ENCODE measurements at regions of chr9 and their contacts with region 1.

Region 1: DNA sequence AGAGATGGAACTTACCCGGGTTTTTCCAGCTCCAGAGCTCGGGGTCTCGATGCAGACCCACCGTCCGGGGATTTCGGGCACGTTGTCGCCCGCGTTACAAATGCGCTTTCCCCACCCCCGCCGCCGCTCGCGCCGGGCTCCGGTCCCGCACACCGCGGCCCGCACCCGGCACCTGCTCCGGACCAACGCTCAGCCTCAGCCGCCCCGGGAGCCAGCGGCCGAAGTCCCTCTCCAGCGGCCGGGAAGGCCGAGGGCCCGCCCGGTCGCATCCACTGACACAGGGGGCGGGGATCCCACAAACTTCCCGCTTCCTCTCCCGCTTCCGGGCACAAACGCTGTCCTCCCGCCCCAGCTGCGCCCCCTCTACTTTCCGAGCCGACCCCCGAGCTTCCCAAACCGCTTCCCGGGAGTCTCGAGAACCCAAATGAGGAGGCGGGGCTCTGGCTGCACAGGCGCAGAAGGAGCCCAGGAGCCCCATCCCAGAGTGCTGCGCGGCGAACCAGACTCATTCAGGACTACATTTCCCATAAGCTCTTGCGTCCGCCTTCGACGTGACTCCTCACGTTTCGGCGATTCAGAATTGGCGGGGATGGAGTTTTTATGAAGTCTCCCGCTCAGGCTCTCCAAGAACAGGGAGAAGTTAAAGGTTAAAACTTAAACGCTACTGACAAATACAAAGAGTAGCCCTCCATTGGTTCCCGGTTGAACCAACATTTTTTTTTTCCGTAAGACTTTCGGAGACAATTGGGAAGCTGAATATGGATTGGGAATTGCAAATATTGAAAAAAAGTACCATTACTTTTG is at the start of gene ZNF782:
- DNase-seq: peak; percentile 94
- H3K4me3 ChIP-seq: peak within 1 kb of the TSS; percentile 65 to 85
- H3K27ac ChIP-seq: peak within 1 kb of the TSS in 1 of 2 experiments; percentile 36; a peak in 3 of 4 replicates
- H3K4me1 ChIP-seq: peaks cover 14 to 15% of the 10 kb centered on the region in 2 experiments
- H3K27me3 ChIP-seq: no peaks in the 10 kb centered on the region
- CTCF ChIP-seq: no peak
- EP300 ChIP-seq: no peak
- RAD21 ChIP-seq: no peak
- polyA plus RNA-seq, gene ZNF782: 1.3 TPM in 2 replicates

Region 2: DNA sequence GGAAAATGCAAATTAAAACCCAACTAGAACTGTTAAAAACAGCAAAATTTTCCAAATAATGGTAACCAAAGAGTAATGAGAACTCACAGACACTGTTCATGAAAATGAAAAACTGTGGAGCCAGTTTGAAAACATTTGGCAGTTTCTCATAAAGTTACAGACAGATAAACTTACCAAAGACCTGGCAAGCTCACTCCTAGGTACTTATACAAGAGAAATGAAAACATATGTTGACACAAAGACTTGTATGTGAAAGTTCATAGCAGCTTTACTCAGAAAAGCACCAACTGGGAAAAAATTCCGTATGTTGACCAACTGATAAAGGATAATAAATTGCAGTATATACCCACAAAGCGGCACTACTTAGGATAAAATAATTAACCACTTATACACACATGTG is 10.2 kb before region 1 on chr9:
- CTCF ChIA-PET with region 1: interaction called, 11 read pairs
- POLR2A ChIA-PET with region 1: no interaction called
- DNase-seq: no peak
- H3K4me3 ChIP-seq: no peak overlapping the region
- H3K27ac ChIP-seq: no peak overlapping the region
- H3K4me1 ChIP-seq: no peaks in the 10 kb centered on the region
- H3K27me3 ChIP-seq: no peaks in the 10 kb centered on the region
- CTCF ChIP-seq: no peak
- EP300 ChIP-seq: no peak
- RAD21 ChIP-seq: no peak

Region 3: GRCh38 chr9:96875461-96876364 is 21.4 kb after region 1 on chr9:
- CTCF ChIA-PET with region 1: interaction called, 44 read pairs
- POLR2A ChIA-PET with region 1: no interaction called
- DNase-seq: peak; percentile 88
- H3K4me3 ChIP-seq: peak overlapping the region; percentile 64 to 76
- H3K27ac ChIP-seq: peak overlapping the region in 1 of 2 experiments; percentile 22; a peak in 1 of 4 replicates
- H3K4me1 ChIP-seq: peaks cover 0 to 4% of the 10 kb centered on the region in 2 experiments; a peak in 1 of 4 replicates
- H3K27me3 ChIP-seq: no peaks in the 10 kb centered on the region
- CTCF ChIP-seq: peak; percentile 35
- EP300 ChIP-seq: no peak
- RAD21 ChIP-seq: peak; percentile 24; the same call in 1 of the 2 replicates

Region 4: GRCh38 chr9:97386733-97387503 is 532.6 kb after region 1 on chr9:
- CTCF ChIA-PET with region 1: interaction called, 50 read pairs
- POLR2A ChIA-PET with region 1: no interaction called
- DNase-seq: peak; percentile 89
- H3K4me3 ChIP-seq: peak overlapping the region; percentile 34 to 46; a peak in 3 of 4 replicates
- H3K27ac ChIP-seq: no peak overlapping the region
- H3K4me1 ChIP-seq: peaks cover 0 to 7% of the 10 kb centered on the region in 2 experiments; a peak in 1 of 4 replicates
- H3K27me3 ChIP-seq: no peaks in the 10 kb centered on the region
- CTCF ChIP-seq: peak; percentile 99
- EP300 ChIP-seq: no peak
- RAD21 ChIP-seq: peak; percentile 74

Region 5: DNA sequence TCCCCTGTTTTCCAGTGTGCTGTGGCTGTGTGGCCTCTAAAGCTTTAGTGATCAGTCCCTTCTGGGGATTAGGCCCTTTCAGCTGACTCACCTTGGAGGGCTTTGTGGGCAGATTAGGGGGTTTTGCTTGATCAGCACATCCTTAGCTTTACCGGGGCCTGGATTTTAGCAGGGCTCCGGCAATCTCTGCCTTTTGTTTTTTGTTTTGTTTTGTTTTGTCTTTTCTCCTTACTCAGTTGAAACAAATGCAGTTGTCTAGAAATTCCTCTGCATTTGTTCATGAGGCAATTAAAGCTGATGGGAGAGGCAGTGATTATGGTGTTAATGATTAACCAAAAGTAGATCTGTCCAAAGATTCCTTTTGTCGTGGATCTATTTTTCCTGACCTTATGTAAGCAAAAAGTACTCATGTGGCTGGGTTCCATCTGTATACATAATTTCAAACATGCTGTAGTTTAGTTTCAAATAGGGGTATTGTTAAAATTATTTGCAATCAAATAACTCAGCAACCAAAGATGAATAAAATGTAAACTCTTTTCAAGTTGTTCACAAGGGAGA is 552.4 kb after region 1 on chr9:
- CTCF ChIA-PET with region 1: interaction called, 134 read pairs
- POLR2A ChIA-PET with region 1: no interaction called
- DNase-seq: no peak
- H3K4me3 ChIP-seq: no peak overlapping the region
- H3K27ac ChIP-seq: no peak overlapping the region
- H3K4me1 ChIP-seq: peaks cover 0 to 3% of the 10 kb centered on the region in 2 experiments; a peak in 2 of 4 replicates
- H3K27me3 ChIP-seq: no peaks in the 10 kb centered on the region
- CTCF ChIP-seq: no peak
- EP300 ChIP-seq: no peak
- RAD21 ChIP-seq: no peak

Measured in SK-N-SH (cell line).